ENCODE measurements at regions of chr14 and their contacts with region 1.

Region 1: DNA sequence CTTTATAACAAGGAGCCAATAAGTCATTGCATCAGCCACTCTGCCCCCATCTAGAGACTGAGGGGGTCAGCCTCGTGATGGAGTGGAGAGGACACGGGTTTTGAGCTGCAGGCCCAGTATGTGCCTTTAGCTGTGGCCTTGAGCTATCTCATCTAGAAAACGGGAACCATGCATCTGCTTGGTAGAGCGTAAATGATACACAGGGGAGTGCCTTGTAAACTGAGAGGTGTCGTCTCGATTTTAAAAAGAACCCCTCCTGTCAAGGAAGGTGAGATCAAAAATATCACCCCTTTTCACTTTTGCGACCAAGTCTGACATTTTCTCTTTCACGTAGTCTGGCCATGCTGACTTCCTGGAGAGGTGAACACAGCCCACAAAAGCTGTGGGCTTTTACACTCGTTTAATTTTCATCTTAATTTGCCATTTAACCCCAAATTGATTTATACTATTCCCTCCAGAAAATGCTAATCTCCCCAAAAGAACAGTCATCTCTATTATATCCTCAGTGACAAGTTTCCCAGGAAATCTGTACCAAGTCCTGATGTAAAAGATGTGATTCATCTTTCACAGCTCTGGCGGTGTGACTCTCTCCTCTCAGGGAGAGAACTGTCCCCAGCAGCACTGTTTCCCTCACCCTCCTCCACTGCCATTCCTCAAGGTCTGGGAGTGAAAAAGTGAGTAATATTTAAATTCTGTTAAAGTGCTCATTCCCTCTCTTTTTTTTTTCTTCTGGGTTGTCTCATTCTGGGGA is 30.6 kb downstream of the VCPKMT start:
- DNase-seq: peak; percentile 74
- H3K4me3 Mint-ChIP-seq: peak overlapping the region; percentile 63
- H3K27ac Mint-ChIP-seq: peak overlapping the region; percentile 93
- H3K4me1 Mint-ChIP-seq: peaks cover 80% of the 10 kb centered on the region
- H3K27me3 Mint-ChIP-seq: no peaks in the 10 kb centered on the region

Region 2: GRCh38 chr14:49867831-49868723 is 217.7 kb before region 1 on chr14:
- intact Hi-C with region 1: loop called (anchors 1 kb)
- DNase-seq: peak; percentile 98
- H3K4me3 Mint-ChIP-seq: peak overlapping the region; percentile 99
- H3K27ac Mint-ChIP-seq: peak overlapping the region; percentile 97
- H3K4me1 Mint-ChIP-seq: peaks cover 23% of the 10 kb centered on the region
- H3K27me3 Mint-ChIP-seq: no peaks in the 10 kb centered on the region

Region 3: GRCh38 chr14:49971156-49972130 is 114.3 kb before region 1 on chr14:
- intact Hi-C with region 1: loop called (anchors 2 kb)
- DNase-seq: peak; percentile 88
- H3K4me3 Mint-ChIP-seq: peak overlapping the region; percentile 82
- H3K27ac Mint-ChIP-seq: peak overlapping the region; percentile 99
- H3K4me1 Mint-ChIP-seq: peaks cover 58% of the 10 kb centered on the region
- H3K27me3 Mint-ChIP-seq: no peaks in the 10 kb centered on the region

Region 4: GRCh38 chr14:50023671-50024490 is 61.9 kb before region 1 on chr14:
- intact Hi-C with region 1: no loop called
- DNase-seq: no peak
- H3K4me3 Mint-ChIP-seq: no peak overlapping the region
- H3K27ac Mint-ChIP-seq: no peak overlapping the region
- H3K4me1 Mint-ChIP-seq: peaks cover 29% of the 10 kb centered on the region
- H3K27me3 Mint-ChIP-seq: no peaks in the 10 kb centered on the region

Region 5: GRCh38 chr14:50060871-50061663 is 24.7 kb before region 1 on chr14:
- intact Hi-C with region 1: loop called (anchors 1 kb)
- DNase-seq: peak; percentile 83
- H3K4me3 Mint-ChIP-seq: peak overlapping the region; percentile 85
- H3K27ac Mint-ChIP-seq: peak overlapping the region; percentile 98
- H3K4me1 Mint-ChIP-seq: peaks cover 76% of the 10 kb centered on the region
- H3K27me3 Mint-ChIP-seq: no peaks in the 10 kb centered on the region

Region 6: DNA sequence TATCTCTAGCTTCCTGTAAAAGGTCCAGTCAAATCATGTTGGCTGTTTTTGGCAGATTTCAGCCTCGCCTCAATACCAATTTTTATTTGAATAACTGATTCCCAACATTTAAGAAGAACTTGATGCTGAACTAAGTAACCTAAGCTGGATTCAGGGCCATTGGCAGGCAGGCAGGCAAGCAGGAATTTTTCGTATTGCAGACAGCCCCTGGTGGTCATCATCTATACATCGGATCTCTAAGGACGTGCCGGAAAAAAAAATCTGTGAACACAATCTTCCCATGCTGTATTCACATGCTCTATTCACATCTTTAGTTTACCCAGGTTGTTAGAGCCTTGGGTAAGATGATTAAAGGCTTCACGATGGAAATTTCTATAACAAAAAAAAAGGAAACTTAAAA is 23.6 kb after region 1 on chr14:
- intact Hi-C with region 1: loop called (anchors 1 kb)
- DNase-seq: no peak
- H3K4me3 Mint-ChIP-seq: no peak overlapping the region
- H3K27ac Mint-ChIP-seq: no peak overlapping the region
- H3K4me1 Mint-ChIP-seq: peaks cover 20% of the 10 kb centered on the region
- H3K27me3 Mint-ChIP-seq: no peaks in the 10 kb centered on the region

Measured in activated CD4-positive, alpha-beta T cell treated with anti-CD3 and anti-CD28 coated beads, Interleukin-2, amount 10 ng/mL, durations not matched to agents 24 days and 14 days (primary cell).